Heart right ventricle (tissue), 16 donors: ENCODE measurements at regions of chr21 and their contacts with region 1.

Region 1: DNA sequence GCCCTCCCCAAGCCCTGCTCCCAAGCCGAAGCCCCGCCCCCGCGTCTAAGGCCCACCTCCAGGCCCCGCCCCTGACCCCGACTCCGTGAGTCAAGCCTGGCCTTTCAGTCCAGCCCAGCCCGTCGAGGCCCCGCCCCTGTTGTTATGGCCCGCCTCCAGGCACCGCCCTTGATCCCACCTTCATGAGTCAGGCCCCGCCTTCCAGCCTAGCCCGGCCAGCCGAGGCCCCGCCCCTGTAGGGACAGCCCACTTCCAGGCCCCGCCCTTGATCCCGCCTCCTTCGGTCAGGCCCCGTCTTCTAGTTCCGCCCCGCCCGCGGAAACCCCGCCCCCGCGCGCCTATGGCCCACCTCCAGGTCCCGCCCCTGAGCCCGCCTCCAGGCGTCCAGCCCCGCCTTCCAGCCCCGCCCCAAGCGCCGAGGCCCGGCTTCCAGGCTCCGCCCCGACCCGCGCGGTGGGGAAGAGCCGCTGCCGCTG is 247 bp upstream of the DOP1B start:
- DNase-seq: peak; percentile 99 to 100
- ATAC-seq: peak; percentile 94 to 98 (median 96)
- H3K4me3 ChIP-seq: peak overlapping the region; percentile 71 to 98 (median 90)
- H3K27ac ChIP-seq: peak overlapping the region; percentile 37 to 95 (median 89)
- H3K4me1 ChIP-seq: peaks cover 0 to 29% (median 21%) of the 10 kb centered on the region in 9 donors
- H3K27me3 ChIP-seq: no peaks in the 10 kb centered on the region
- CTCF ChIP-seq: no peak

Region 2: DNA sequence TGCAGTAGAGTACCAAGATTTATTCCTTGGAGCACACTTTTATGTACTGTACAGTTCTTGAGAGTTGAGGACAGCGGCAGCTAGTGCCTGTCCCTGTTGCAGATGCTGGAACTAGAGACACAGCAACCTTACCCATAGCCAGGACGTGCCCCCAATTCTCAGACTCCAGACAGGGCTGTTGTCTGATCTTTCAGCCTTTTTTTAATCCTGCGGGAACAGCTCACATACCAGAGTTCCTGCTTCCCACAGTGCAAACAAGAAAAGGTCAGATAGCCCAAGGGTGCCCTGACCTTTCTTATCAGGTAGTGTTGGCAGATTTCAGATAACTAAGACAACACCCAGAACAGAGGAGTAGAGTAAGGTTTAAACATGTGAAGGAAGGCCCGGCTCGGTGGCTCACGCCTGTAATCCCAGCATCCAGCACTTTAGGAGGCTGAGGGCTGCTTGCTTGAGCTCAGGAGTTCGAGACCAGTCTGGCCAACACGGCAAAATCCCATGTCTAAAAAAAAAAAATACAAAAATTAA is 78.7 kb after region 1 on chr21:
- intact Hi-C with region 1: loop called in 1 of 10 experiments (anchors 10 kb)
- DNase-seq: no peak
- ATAC-seq: peak in 5 of 8 donors; percentile 41 to 76 (median 51)
- H3K4me3 ChIP-seq: no peak overlapping the region
- H3K27ac ChIP-seq: peak overlapping the region in 4 of 10 donors; percentile 12 to 43 (median 29)
- H3K4me1 ChIP-seq: peaks cover 0 to 27% (median 14%) of the 10 kb centered on the region in 9 donors
- H3K27me3 ChIP-seq: no peaks in the 10 kb centered on the region
- CTCF ChIP-seq: no peak